Mammary epithelial cell (primary cell): ENCODE measurements at regions of chr1 and their contacts with region 1.

Region 1: DNA sequence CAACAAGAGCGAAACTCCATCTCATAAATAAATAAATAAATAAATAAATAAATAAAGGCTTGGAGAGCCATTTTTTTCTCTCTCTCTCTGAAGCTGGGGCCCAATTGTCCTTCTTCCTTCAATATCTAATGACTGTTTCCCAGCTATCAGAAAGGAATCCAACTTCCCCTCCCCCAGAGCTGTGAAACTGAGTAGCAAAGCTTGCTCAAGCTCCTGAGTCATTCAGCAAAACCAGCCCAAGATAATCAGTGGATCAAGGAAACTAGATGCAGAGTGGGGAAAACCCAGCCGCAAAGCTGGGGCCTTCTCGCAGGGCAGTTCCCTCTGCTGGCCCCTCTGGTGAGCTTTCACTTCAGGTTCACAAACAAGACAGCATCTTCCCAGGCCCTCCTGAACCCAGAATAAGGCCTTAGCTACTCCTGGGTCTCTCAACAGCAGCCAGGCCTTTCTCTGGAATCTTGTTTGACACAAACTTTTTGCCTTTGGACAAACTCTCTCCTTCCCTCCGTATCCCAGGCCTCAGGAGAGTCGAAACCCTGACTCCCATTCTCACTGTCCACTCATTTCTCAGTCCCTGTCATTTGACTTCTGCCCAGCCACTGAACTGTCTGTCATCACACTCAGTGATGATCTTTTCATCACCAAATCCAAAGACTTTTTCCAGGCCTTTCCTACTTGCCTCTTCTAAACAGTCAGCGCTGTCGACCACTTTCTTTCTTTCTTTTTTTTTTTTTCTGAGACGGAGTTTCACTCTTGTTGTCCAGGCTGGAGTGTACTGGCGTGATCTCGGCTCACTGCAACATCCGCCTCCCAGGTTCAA is 18.0 kb upstream of the PTP4A2 start:
- DNase-seq: peak; percentile 99
- H3K4me3 ChIP-seq: no peak overlapping the region
- H3K27ac ChIP-seq: peak overlapping the region; percentile 89
- H3K4me1 ChIP-seq: peaks cover 24% of the 10 kb centered on the region
- H3K27me3 ChIP-seq: no peaks in the 10 kb centered on the region
- CTCF ChIP-seq: peak in 1 of 2 donors; percentile 51

Region 2: GRCh38 chr1:30966690-30967369 is 989.3 kb before region 1 on chr1:
- CTCF ChIA-PET with region 1: no interaction called
- dilution Hi-C with region 1: no loop called
- in situ Hi-C with region 1: no loop called
- intact Hi-C with region 1: no loop called
- DNase-seq: peak; percentile 31
- H3K4me3 ChIP-seq: no peak overlapping the region
- H3K27ac ChIP-seq: no peak overlapping the region
- H3K4me1 ChIP-seq: peaks cover 11% of the 10 kb centered on the region
- H3K27me3 ChIP-seq: no peaks in the 10 kb centered on the region
- CTCF ChIP-seq: no peak

Region 3: GRCh38 chr1:31576201-31576669 is 379.9 kb before region 1 on chr1 and contains the start of gene TINAGL1:
- CTCF ChIA-PET with region 1: interaction called, 5 read pairs
- dilution Hi-C with region 1: no loop called
- in situ Hi-C with region 1: no loop called
- intact Hi-C with region 1: loop called (anchors 10 kb)
- DNase-seq: peak; percentile 96
- H3K4me3 ChIP-seq: peak within 1 kb of the TSS; percentile 71 to 90 (median 83)
- H3K27ac ChIP-seq: peak within 1 kb of the TSS; percentile 68
- H3K4me1 ChIP-seq: peaks cover 64% of the 10 kb centered on the region
- H3K27me3 ChIP-seq: no peaks in the 10 kb centered on the region
- CTCF ChIP-seq: no peak
- total RNA-seq, gene TINAGL1: 433 to 840 TPM

Region 4: DNA sequence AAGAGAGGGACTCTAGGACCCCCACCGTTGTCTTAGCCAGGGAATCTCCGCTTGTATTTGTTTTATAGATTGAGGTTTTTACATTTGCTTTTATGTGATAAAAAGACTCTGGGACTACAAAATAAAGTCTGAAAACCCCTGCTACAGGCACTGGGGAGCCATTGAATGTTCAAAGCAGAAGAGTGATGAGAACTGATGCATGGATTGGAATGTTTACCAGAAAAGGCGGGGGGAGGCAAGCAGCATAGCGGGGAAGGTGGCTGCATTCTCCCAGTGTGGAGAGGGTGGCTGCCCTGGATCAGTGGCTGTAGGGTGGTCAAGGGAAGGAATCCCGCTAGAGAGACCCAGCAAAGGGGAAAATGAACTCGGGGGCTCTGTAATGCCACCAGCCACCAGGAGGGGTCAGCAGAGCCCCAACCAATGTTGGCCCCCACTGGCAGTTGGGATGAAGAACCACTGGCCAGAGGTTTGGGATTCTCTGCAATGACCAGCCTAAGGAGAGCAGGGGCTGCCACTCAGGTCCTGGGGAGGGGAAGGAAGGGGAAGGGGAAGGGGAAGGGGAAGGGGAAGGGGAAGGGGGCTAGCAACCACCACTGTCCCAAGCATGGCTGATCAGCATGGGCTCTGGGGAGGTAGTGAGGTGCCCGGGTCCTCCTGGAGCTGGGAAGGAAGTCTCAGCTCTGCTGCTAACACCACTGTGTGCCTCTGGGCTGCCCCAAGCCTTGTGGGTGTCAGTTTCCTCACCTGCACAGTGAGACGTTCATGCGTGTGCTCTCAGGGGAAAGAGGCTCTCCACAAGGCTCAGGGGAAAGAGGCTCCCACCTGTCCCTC is 292.3 kb before region 1 on chr1:
- CTCF ChIA-PET with region 1: no interaction called
- dilution Hi-C with region 1: no loop called
- in situ Hi-C with region 1: loop called in 1 of 2 experiments (anchors 25 kb)
- intact Hi-C with region 1: no loop called
- DNase-seq: no peak
- H3K4me3 ChIP-seq: no peak overlapping the region
- H3K27ac ChIP-seq: no peak overlapping the region
- H3K4me1 ChIP-seq: peaks cover 23% of the 10 kb centered on the region
- H3K27me3 ChIP-seq: no peaks in the 10 kb centered on the region
- CTCF ChIP-seq: peak; percentile 75 to 77

Region 5: DNA sequence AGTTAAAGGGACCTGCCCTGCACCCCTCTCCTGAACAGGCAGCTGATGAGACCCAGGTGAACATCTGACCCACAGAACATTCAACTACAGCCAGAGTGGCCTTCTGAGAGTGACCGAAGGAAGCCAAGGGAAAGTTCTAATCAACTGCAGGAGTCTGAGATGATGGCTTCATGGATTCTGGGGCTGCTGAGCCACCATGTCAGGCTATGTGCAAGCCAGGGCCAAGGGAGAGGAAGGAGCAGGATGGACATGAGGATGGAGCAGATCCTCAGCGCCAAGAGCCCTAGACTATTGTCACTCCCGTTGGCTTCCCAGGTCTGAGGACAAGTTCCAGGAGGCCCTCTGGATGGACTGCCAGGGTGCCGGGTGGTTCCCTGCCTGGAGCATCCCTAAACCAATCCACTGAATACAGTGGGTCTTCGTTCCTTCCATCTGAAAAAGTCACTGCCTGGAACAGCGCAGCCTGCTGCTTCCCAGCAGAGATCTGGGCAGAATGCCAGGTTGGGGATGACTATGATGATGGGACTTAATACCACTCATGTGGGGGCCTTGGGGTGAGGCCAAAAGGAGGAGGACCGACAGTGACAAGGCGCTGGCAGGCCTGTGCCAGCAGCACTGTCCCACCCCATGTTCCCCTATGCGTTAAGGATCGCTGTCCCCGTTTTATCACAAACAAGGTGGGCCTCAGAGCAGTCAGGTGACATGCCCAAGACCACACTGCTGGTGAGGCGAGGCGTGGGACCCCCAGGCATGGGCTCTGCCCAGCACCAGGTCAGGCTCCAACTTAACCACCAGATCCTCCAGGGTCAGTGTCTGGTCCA is 160.1 kb before region 1 on chr1:
- CTCF ChIA-PET with region 1: no interaction called
- dilution Hi-C with region 1: no loop called
- in situ Hi-C with region 1: loop called (anchors 5 to 10 kb)
- intact Hi-C with region 1: no loop called
- DNase-seq: no peak
- H3K4me3 ChIP-seq: no peak overlapping the region
- H3K27ac ChIP-seq: no peak overlapping the region
- H3K4me1 ChIP-seq: peaks cover 19% of the 10 kb centered on the region
- H3K27me3 ChIP-seq: no peaks in the 10 kb centered on the region
- CTCF ChIP-seq: no peak

Region 6: GRCh38 chr1:31802190-31803150 is 153.7 kb before region 1 on chr1:
- CTCF ChIA-PET with region 1: no interaction called
- dilution Hi-C with region 1: no loop called
- in situ Hi-C with region 1: loop called (anchors 5 to 10 kb)
- intact Hi-C with region 1: no loop called
- DNase-seq: no peak
- H3K4me3 ChIP-seq: no peak overlapping the region
- H3K27ac ChIP-seq: no peak overlapping the region
- H3K4me1 ChIP-seq: peaks cover 19% of the 10 kb centered on the region
- H3K27me3 ChIP-seq: no peaks in the 10 kb centered on the region
- CTCF ChIP-seq: no peak

Region 7: DNA sequence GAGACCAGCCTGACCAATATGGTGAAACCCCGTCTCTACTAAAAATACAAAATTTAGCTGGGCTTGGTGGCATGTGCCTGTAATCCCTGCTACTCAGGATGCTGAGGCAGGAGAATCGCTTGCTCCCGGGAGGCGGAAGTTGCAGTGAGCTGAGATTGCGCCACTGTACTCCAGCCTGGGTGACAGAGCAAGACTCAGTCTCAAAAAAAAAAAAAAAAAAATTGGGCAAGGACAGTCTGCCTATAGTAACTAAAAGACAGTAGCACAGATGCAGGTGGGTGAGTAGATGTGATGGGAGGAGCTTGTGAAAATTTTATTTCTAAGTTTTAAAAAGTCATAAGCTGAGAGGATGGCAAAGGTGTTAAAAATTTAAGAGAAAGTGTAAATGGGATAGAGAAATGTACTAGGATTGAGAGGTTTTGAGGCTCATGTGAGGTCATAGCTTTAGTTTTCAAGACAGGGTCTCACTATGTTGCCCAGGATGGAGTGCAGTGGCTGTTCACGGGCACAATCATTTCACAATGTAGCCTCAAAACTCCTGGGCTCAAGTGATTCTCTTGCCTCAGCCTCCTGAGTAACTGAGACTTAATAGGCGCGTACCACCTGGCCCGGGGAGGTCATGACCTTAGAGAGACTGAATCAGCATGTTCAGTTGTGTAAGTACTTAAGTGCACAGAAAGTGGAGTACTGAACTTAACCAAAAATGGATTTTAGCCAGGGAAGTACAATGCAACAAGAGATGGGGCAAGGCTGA is 51.6 kb before region 1 on chr1:
- CTCF ChIA-PET with region 1: no interaction called
- dilution Hi-C with region 1: no loop called
- in situ Hi-C with region 1: no loop called
- intact Hi-C with region 1: loop called (anchors 5 kb)
- DNase-seq: peak; percentile 14
- H3K4me3 ChIP-seq: no peak overlapping the region
- H3K27ac ChIP-seq: no peak overlapping the region
- H3K4me1 ChIP-seq: no peaks in the 10 kb centered on the region
- H3K27me3 ChIP-seq: no peaks in the 10 kb centered on the region
- CTCF ChIP-seq: no peak

Region 8: DNA sequence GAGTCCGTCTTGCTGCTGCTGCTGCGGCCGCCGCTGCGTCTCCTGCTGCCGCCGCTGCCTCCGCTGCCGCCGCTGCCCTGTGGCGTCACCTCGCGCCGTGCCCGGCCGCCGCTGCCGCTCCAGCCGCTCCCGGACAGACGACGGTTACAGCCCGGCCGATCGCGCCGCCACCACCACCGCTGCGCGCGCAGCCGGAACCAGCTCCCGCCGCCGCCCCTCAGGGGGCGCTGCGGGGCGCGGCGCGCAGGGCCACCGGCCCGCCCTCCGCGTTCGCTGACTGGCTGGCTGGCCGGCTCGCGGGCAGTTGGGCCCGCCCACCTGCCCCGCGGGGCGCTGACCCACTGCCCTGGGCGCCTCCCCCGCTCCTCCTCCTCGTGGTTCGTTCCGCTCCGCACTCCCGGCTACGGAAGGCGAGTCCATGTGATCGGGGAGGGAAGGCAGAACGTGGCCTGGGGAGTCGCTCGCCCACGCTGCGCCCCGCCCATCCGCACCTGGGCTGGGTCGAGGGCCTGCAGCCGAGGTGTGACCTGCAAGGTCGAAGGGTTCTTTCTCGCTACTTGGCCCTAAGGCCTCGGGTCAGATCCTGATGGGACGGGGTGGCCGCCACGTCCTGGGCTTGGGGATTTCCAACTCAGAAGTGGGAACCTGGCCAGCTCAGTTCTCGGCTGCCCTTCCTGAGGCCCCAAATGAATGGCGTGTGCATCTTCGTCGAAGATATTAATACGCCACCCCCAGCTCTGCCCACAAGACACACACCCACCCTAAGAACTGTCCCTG is 17.8 kb before region 1 on chr1 and contains the start of gene PTP4A2:
- CTCF ChIA-PET with region 1: interaction called, 12 read pairs
- dilution Hi-C with region 1: no loop called
- in situ Hi-C with region 1: no loop called
- intact Hi-C with region 1: loop called (anchors 1 kb)
- DNase-seq: peak; percentile 95
- H3K4me3 ChIP-seq: peak within 1 kb of the TSS; percentile 73 to 98 (median 86)
- H3K27ac ChIP-seq: peak within 1 kb of the TSS; percentile 86
- H3K4me1 ChIP-seq: peaks cover 47% of the 10 kb centered on the region
- H3K27me3 ChIP-seq: no peaks in the 10 kb centered on the region
- CTCF ChIP-seq: peak; percentile 37 to 39
- total RNA-seq, gene PTP4A2: 185 to 216 TPM